GM10248 (cell line): ENCODE measurements at regions of chr6 and their contacts with region 1.

Region 1: DNA sequence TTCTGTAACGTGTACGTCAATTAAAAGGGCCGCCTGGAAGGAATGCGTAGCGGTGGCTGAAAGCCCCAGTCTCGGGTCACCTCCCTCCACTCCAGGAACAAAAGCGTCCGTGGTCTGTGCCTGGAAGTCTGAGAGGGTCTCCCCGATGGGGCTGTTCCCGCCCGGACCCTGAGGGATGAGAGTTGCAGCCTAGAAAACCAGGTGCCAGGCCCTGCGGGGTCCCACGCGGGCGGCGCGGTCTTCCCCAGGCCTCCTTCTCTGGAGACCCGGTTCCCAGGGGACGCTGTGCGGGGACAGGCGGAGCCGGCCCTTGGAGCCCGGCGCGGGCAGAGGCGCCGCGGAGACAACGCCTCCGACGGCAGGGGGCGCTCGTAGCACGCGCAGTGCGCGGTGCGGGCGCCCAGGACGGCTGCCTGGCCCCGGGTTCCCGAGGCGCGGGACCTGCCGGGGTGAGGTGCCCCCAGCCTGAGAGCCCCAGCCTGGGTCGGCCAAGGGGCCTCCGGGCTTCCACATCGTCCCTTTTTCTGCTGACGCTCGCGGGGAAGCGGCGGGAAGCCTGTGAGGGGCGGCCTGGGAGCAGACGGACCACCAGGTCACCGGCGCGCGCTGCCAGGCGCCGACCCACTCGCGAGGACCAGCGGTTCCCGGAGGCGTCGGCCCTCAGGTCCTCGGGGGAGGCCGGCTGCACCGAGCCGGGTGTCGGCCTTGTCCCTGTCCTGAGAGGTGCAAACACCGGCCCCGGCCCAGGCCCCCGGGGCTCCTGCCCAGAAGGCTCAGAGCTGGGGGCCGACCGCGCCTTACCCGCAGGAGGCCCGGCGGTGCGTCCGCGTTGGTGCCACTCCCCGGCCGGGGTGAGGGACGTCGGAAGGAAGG is 5.3 kb upstream of the FOXC1 start:
- DNase-seq: peak; percentile 86
- CTCF ChIP-seq: peak; percentile 88

Region 2: GRCh38 chr6:1372690-1373089 is 231.7 kb before region 1 on chr6:
- CTCF ChIA-PET with region 1: no interaction called
- POLR2A ChIA-PET with region 1: no interaction called
- DNase-seq: no peak
- CTCF ChIP-seq: no peak

Region 3: GRCh38 chr6:2103644-2104523 is 499.5 kb after region 1 on chr6:
- CTCF ChIA-PET with region 1: interaction called, 20 read pairs
- POLR2A ChIA-PET with region 1: no interaction called
- DNase-seq: peak; percentile 59
- CTCF ChIP-seq: peak; percentile 57

Region 4: DNA sequence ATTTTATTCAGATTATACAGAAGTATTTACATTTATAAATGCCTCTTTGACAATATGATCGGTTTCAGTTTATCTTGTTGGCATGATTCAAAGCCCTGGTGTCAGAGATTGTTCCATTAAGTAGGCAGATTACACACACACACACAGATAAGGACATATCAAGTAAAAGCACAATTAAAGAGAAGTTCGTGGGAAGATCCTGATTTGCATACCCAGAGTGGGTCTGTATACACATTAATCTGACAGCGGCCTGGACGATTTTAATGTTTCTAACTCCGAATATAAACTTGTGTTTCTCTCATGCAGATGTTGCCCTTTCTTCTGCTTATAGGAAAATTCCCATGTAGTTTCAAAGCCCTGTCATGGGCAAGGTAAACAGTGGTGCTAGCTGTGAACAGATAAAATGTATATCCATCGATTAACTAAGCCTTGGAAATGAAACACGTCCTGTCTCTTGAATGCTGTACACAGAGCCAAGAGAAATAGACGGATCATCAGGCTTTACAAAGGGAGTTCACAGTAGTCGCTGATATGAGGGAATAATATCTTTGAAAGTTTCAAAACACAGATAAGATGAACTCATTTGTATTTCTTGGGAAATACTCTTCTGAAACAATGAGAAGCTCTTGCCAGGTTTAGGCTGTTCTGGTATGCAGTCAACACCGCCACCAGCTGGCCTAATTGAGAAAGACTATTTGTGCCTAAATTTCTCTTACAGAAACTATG is 749.2 kb after region 1 on chr6:
- CTCF ChIA-PET with region 1: interaction called, 11 read pairs
- POLR2A ChIA-PET with region 1: no interaction called
- DNase-seq: peak; percentile 57
- CTCF ChIP-seq: peak; percentile 67